Activated CD4-positive, alpha-beta memory T cell treated with anti-CD3 and anti-CD28 coated beads for 36 hours (primary cell): ENCODE measurements at regions of chr12 and their contacts with region 1.

Region 1: DNA sequence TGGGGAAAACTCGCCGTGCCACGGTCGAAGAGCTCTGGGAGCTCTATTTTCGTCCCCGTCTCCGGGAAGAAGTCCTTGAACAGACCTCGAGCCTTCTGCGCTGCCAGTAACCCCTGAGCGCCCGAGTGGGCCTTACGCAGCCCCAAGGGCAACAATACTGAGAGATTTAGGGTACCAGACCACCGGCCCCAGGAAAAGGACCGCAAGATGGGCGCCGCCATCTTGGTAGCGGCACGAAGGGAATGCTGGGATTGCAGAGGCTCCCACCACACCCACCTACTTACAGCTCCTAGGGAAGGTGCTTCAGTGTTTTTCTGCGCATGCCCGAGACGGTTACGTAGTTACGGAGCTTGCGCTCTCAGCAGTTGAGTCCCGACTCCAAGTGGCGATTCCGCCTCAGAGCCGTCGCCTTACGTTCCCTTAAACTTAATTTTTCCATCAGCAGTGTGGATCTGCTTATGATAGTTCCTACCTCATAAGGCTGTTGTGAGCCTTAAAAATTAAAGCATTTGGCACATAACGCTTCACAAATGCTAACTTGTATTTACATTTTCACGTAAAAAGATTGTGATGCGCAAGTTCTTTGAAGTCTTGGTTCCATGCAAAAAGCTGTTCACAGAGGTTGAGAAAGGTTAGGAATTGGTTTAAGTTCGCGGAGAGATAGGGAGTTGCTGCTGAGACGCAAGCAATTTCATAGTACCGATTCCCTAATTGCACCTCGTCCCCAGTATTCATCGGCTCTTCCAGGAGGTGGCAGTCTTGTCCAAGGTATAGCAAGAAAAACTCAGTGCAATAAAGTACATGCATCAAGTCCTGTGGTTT is at the start of gene YARS2:
- DNase-seq: peak; percentile 93
- H3K4me3 Mint-ChIP-seq: peak within 1 kb of the TSS; percentile 91
- H3K27ac Mint-ChIP-seq: peak within 1 kb of the TSS; percentile 93
- H3K4me1 Mint-ChIP-seq: peaks cover 21% of the 10 kb centered on the region
- H3K27me3 Mint-ChIP-seq: no peaks in the 10 kb centered on the region
- total RNA-seq, gene YARS2: 23.1 to 28.4 TPM

Region 2: GRCh38 chr12:31659087-31659933 is 1096.6 kb before region 1 on chr12 and contains the start of gene ETFBKMT:
- CTCF ChIA-PET with region 1: no interaction called
- POLR2A ChIA-PET with region 1: no interaction called
- intact Hi-C with region 1: loop called (anchors 1 kb)
- DNase-seq: peak; percentile 97
- H3K4me3 Mint-ChIP-seq: peak within 1 kb of the TSS; percentile 96
- H3K27ac Mint-ChIP-seq: peak within 1 kb of the TSS; percentile 95
- H3K4me1 Mint-ChIP-seq: peaks cover 7% of the 10 kb centered on the region
- H3K27me3 Mint-ChIP-seq: no peaks in the 10 kb centered on the region
- total RNA-seq, gene ETFBKMT: 1.1 to 1.3 TPM

Region 3: DNA sequence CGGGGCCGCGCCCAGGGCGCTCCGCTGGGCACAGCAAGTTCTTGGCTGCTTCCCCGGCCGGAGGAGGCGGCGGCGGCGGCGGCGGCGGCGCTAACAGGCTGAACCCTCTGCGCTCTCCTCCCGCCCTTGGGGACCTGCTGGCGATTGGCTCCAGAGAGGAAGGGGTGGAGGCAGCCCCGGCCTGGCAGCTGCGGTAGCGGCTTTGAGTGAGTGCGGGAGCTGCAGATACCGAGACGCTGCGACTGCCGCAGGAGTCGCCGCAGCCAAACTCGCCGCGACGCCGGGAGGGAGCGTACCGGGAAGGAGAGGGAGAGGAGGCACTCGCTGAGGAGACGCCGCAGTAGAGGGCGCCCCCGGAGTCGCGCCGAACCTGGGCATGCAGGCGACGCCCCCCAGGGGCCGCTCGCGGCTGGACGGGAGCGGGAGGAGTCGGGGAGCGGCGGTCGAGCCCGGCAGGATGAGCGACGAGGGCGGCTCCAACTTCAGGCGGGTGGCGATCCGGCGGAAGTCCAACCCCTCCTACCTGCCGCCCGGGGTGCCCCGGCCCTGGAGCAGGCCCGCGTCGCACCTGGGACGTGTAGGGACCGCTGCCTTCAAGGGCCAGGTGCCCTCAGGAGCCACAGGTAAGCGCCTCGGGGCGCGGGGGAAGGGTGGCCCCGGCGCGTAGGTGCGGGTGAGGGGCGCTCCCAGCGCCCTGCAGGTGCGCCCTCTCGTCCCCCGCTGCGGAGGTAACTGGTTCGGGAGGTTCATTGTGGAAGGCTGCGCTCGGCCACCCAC is 356.3 kb before region 1 on chr12 and contains the start of gene FGD4:
- CTCF ChIA-PET with region 1: interaction called, 10 read pairs
- POLR2A ChIA-PET with region 1: no interaction called
- intact Hi-C with region 1: no loop called
- DNase-seq: peak; percentile 76
- H3K4me3 Mint-ChIP-seq: peak within 1 kb of the TSS; percentile 81
- H3K27ac Mint-ChIP-seq: no peak within 1 kb of the TSS
- H3K4me1 Mint-ChIP-seq: peaks cover 2% of the 10 kb centered on the region
- H3K27me3 Mint-ChIP-seq: peaks cover 23% of the 10 kb centered on the region
- total RNA-seq, gene FGD4: 0.19 to 0.22 TPM

Region 4: DNA sequence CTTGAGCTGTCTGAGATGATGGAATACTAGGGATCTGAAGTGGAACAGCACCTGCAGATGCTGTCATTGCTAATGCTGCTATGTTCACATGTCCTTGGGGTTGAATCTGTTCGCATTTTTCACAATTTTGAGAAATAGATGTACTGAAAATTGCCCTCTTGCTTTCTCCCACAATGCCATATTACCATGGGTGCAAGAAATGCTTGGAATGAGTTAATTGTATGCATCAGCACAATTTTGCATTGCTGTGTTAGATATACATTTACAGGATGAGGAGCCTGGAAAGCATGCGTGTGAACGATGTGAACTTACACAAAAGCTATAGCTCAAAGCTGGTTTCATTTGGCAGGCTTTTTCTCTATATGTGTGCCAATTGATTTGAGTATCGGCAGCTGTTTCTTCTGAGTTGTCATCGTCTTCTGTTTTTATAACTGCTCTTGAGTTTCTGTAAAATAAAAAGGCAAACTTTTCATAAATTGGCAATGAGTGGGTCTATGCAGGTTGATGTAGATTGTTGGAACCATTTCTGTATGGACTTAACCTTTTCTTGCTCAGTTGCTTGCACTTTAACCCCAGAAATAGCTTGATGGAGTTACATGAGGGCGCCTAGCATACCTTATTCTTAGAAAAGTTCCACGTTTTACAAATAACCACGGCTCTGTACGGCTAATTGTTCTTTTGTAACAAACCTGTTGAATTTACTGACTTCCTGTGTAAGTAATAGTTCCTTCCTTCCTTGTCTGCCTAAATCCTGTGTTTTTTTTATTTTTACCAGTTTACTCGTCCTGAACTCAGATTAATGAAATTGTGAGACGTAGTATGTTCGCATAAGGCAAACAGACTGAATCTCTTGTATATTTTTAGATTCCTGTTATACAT is 250.6 kb before region 1 on chr12:
- CTCF ChIA-PET with region 1: no interaction called
- POLR2A ChIA-PET with region 1: no interaction called
- intact Hi-C with region 1: no loop called
- DNase-seq: no peak
- H3K4me3 Mint-ChIP-seq: no peak overlapping the region
- H3K27ac Mint-ChIP-seq: no peak overlapping the region
- H3K4me1 Mint-ChIP-seq: no peaks in the 10 kb centered on the region
- H3K27me3 Mint-ChIP-seq: peaks cover 12% of the 10 kb centered on the region

Region 5: DNA sequence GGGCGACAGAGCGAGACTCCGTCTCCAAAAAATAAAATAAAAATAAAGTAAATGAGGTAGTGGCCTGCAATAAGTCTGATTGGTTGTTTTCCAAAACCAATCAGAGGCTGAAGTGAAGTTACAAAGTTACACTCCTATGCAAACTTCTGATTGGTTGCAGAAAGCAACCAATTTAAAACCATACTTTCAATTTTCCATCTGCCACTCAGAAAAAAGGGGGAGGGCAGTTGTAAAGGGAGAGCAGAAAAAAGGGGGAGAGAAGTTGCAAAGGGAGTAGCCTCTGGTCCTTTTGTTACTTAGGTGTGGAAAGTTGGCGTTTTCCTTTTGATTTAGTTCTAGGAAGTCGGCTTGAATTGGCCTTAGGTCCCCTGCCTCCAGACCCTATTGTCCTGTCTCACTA is 89.4 kb before region 1 on chr12:
- CTCF ChIA-PET with region 1: no interaction called
- POLR2A ChIA-PET with region 1: no interaction called
- intact Hi-C with region 1: no loop called
- DNase-seq: no peak
- H3K4me3 Mint-ChIP-seq: no peak overlapping the region
- H3K27ac Mint-ChIP-seq: no peak overlapping the region
- H3K4me1 Mint-ChIP-seq: no peaks in the 10 kb centered on the region
- H3K27me3 Mint-ChIP-seq: peaks cover 3% of the 10 kb centered on the region

Region 6: GRCh38 chr12:32679091-32679919 is 76.6 kb before region 1 on chr12 and contains the start of gene DNM1L:
- CTCF ChIA-PET with region 1: interaction called, 17 read pairs
- POLR2A ChIA-PET with region 1: interaction called, 6 read pairs
- intact Hi-C with region 1: loop called (anchors 1 kb)
- DNase-seq: peak; percentile 94
- H3K4me3 Mint-ChIP-seq: peak within 1 kb of the TSS; percentile 87
- H3K27ac Mint-ChIP-seq: peak within 1 kb of the TSS; percentile 85
- H3K4me1 Mint-ChIP-seq: peaks cover 15% of the 10 kb centered on the region
- H3K27me3 Mint-ChIP-seq: no peaks in the 10 kb centered on the region
- total RNA-seq, gene DNM1L: 59.0 to 62.5 TPM

Region 7: GRCh38 chr12:34022079-34022830 is 1266.4 kb after region 1 on chr12 and contains the start of gene ALG10:
- CTCF ChIA-PET with region 1: interaction called, 100 read pairs
- POLR2A ChIA-PET with region 1: interaction called, 16 read pairs
- intact Hi-C with region 1: loop called (anchors 1 kb)
- DNase-seq: peak; percentile 97
- H3K4me3 Mint-ChIP-seq: peak within 1 kb of the TSS; percentile 96
- H3K27ac Mint-ChIP-seq: peak within 1 kb of the TSS; percentile 94
- H3K4me1 Mint-ChIP-seq: peaks cover 15% of the 10 kb centered on the region
- H3K27me3 Mint-ChIP-seq: no peaks in the 10 kb centered on the region
- total RNA-seq, gene ALG10: 19.4 to 20.9 TPM